ENCODE measurements at regions of chr1 and their contacts with region 1.

Region 1: GRCh38 chr1:172089768-172090510 is 248.6 kb downstream of the DNM3 start:
- DNase-seq: peak; percentile 79
- H3K4me3 Mint-ChIP-seq: no peak overlapping the region
- H3K27ac Mint-ChIP-seq: no peak overlapping the region
- H3K4me1 Mint-ChIP-seq: peaks cover 8% of the 10 kb centered on the region
- H3K27me3 Mint-ChIP-seq: no peaks in the 10 kb centered on the region
- CTCF ChIP-seq: peak; percentile 97

Region 2: GRCh38 chr1:172002725-172003345 is 87.1 kb before region 1 on chr1:
- CTCF ChIA-PET with region 1: interaction called, 35 read pairs
- POLR2A ChIA-PET with region 1: no interaction called
- intact Hi-C with region 1: loop called (anchors 1 kb)
- DNase-seq: peak; percentile 70
- H3K4me3 Mint-ChIP-seq: no peak overlapping the region
- H3K27ac Mint-ChIP-seq: no peak overlapping the region
- H3K4me1 Mint-ChIP-seq: peaks cover 18% of the 10 kb centered on the region
- H3K27me3 Mint-ChIP-seq: no peaks in the 10 kb centered on the region
- CTCF ChIP-seq: peak; percentile 95

Region 3: DNA sequence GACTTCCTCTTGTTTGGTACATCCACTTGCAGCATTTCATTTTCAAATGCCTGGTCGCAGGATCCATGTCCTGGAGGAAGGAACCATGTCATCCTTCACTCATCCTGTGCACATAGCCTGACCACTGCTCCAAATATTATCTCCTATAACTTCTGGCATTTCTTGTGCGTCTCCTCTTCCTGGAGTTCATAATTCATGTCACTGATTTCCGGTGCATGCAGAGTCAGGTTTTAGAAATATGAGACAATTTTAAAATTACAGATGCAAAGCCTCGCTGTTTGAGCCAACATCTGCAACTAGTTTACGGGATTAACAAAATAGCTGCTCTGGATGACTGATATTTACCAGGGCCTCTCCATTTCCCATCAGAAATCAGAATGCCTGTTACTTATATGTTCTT is 19.4 kb after region 1 on chr1:
- CTCF ChIA-PET with region 1: interaction called, 14 read pairs
- POLR2A ChIA-PET with region 1: no interaction called
- intact Hi-C with region 1: no loop called
- DNase-seq: no peak
- H3K4me3 Mint-ChIP-seq: no peak overlapping the region
- H3K27ac Mint-ChIP-seq: no peak overlapping the region
- H3K4me1 Mint-ChIP-seq: no peaks in the 10 kb centered on the region
- H3K27me3 Mint-ChIP-seq: no peaks in the 10 kb centered on the region
- CTCF ChIP-seq: no peak

Region 4: GRCh38 chr1:172351761-172352161 is 261.8 kb after region 1 on chr1:
- CTCF ChIA-PET with region 1: interaction called, 10 read pairs
- POLR2A ChIA-PET with region 1: no interaction called
- intact Hi-C with region 1: no loop called
- DNase-seq: peak; percentile 71
- H3K4me3 Mint-ChIP-seq: no peak overlapping the region
- H3K27ac Mint-ChIP-seq: peak overlapping the region; percentile 73
- H3K4me1 Mint-ChIP-seq: peaks cover 52% of the 10 kb centered on the region
- H3K27me3 Mint-ChIP-seq: no peaks in the 10 kb centered on the region
- CTCF ChIP-seq: no peak

Region 5: DNA sequence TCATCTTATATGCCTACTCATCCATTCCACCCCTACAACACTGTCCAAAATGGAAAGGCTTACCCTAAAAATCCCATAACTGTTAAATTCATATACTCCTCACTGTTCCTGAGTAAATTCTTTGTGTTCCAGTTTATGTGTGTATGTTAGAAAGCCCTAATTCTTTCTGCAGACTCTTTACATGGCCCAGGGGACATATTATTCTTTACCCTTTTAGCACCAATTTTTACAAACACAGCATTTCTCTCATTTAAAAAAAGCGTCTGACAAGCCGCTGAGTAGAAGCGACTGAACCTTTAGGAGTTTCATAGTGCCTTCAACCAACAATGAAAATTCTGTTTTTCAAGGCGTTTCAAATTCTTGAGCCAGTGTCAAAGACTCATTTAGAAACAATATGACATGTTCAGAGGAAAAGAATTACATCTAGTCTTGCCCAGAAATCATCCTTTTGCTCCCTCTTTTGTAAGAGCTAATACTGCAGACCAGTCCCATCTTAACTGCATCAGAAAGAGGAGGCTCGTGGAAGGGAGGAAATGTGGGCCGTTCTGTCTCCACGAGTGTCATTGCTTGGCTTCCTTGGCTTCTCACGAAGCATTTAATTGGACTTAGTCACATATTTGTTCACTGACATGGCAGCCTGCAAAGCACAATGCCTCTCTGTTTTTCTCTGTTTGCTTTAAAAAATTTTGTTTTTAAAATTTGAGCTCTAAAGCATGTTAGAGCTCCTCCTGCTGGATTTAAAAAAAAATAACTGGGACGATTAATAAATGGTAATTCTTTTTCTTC is 309.2 kb after region 1 on chr1:
- CTCF ChIA-PET with region 1: interaction called, 135 read pairs
- POLR2A ChIA-PET with region 1: interaction called, 5 read pairs
- intact Hi-C with region 1: loop called (anchors 1 kb)
- DNase-seq: peak; percentile 67
- H3K4me3 Mint-ChIP-seq: peak overlapping the region; percentile 26
- H3K27ac Mint-ChIP-seq: peak overlapping the region; percentile 21
- H3K4me1 Mint-ChIP-seq: peaks cover 33% of the 10 kb centered on the region
- H3K27me3 Mint-ChIP-seq: no peaks in the 10 kb centered on the region
- CTCF ChIP-seq: peak; percentile 77

Region 6: GRCh38 chr1:172417552-172417951 is 327.6 kb after region 1 on chr1:
- CTCF ChIA-PET with region 1: interaction called, 12 read pairs
- POLR2A ChIA-PET with region 1: no interaction called
- intact Hi-C with region 1: no loop called
- DNase-seq: peak; percentile 30
- H3K4me3 Mint-ChIP-seq: no peak overlapping the region
- H3K27ac Mint-ChIP-seq: no peak overlapping the region
- H3K4me1 Mint-ChIP-seq: peaks cover 7% of the 10 kb centered on the region
- H3K27me3 Mint-ChIP-seq: no peaks in the 10 kb centered on the region
- CTCF ChIP-seq: no peak

Region 7: GRCh38 chr1:173020138-173020750 is 930.3 kb after region 1 on chr1:
- CTCF ChIA-PET with region 1: no interaction called
- POLR2A ChIA-PET with region 1: no interaction called
- intact Hi-C with region 1: loop called (anchors 10 kb)
- DNase-seq: no peak
- H3K4me3 Mint-ChIP-seq: no peak overlapping the region
- H3K27ac Mint-ChIP-seq: no peak overlapping the region
- H3K4me1 Mint-ChIP-seq: no peaks in the 10 kb centered on the region
- H3K27me3 Mint-ChIP-seq: no peaks in the 10 kb centered on the region
- CTCF ChIP-seq: no peak